ENCODE measurements at regions of chr10 and their contacts with region 1.

Region 1: GRCh38 chr10:99430451-99431189 is at the start of gene GOT1:
- DNase-seq: peak; percentile 98
- H3K4me3 ChIP-seq: peak within 1 kb of the TSS; percentile 97
- H3K4me3 Mint-ChIP-seq: peak within 1 kb of the TSS; percentile 99
- H3K27ac Mint-ChIP-seq: peak within 1 kb of the TSS; percentile 97
- H3K4me1 ChIP-seq: no peaks in the 10 kb centered on the region; the same call in 1 of the 2 replicates
- H3K4me1 Mint-ChIP-seq: peaks cover 12% of the 10 kb centered on the region
- H3K27me3 ChIP-seq: no peaks in the 10 kb centered on the region
- H3K27me3 Mint-ChIP-seq: no peaks in the 10 kb centered on the region
- CTCF ChIP-seq: no peak
- total RNA-seq, gene GOT1: 58.5 and 59.8 TPM in 2 replicates

Region 2: GRCh38 chr10:99532687-99533495 is 102.3 kb after region 1 on chr10 and contains the start of gene NKX2-3:
- CTCF ChIA-PET with region 1: interaction called, 5 read pairs
- POLR2A ChIA-PET with region 1: interaction called, 9 read pairs
- intact Hi-C with region 1: loop called (anchors 1 kb)
- DNase-seq: peak; percentile 87 to 88
- H3K4me3 ChIP-seq: peak within 1 kb of the TSS; percentile 37
- H3K4me3 Mint-ChIP-seq: peak within 1 kb of the TSS; percentile 74
- H3K27ac Mint-ChIP-seq: no peak within 1 kb of the TSS
- H3K4me1 ChIP-seq: peaks cover 17% of the 10 kb centered on the region; the same call in 1 of the 2 replicates
- H3K4me1 Mint-ChIP-seq: peaks cover 8% of the 10 kb centered on the region
- H3K27me3 ChIP-seq: no peaks in the 10 kb centered on the region
- H3K27me3 Mint-ChIP-seq: no peaks in the 10 kb centered on the region
- CTCF ChIP-seq: no peak
- total RNA-seq, gene NKX2-3: 0.37 and 0.43 TPM in 2 replicates

Region 3: DNA sequence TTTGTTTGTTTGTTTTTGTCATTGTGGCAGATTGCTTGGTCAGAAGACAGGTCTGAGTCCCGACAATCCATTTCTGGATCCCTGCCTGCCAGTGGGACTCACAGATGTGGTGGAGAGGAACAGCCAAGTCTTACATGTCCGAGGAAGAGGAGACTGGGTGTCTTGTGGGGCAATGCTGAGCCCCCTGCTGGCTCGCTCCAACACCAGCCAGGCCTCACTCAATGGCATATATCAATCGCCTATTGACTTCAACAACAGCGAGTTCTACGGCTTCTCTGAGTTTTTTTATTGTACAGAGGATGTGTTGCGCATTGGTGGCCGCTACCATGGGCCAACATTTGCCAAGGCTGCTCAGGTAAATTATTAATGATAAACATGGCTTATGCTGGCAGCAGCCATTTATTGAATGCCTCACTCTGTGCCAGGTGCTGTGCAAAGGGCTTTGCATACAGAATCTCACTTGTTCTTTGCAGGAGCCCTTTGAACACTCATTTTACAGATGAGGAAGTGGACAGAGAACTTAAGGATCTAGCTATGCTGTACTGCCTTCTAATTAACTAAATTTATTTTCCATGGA is 268.0 kb after region 1 on chr10:
- CTCF ChIA-PET with region 1: no interaction called
- POLR2A ChIA-PET with region 1: no interaction called
- intact Hi-C with region 1: loop called (anchors 10 kb)
- DNase-seq: peak in 1 of 2 experiments; percentile 43
- H3K4me3 ChIP-seq: no peak overlapping the region
- H3K4me3 Mint-ChIP-seq: no peak overlapping the region
- H3K27ac Mint-ChIP-seq: no peak overlapping the region
- H3K4me1 ChIP-seq: no peaks in the 10 kb centered on the region
- H3K4me1 Mint-ChIP-seq: peaks cover 4% of the 10 kb centered on the region
- H3K27me3 ChIP-seq: no peaks in the 10 kb centered on the region
- H3K27me3 Mint-ChIP-seq: no peaks in the 10 kb centered on the region
- CTCF ChIP-seq: peak; percentile 14 to 61

Measured in Caco-2 (cell line).